Activated CD4-positive, alpha-beta T cell treated with anti-CD3 and anti-CD28 coated beads for 36 hours (primary cell): ENCODE measurements at regions of chr17 and their contacts with region 1.

Region 1: DNA sequence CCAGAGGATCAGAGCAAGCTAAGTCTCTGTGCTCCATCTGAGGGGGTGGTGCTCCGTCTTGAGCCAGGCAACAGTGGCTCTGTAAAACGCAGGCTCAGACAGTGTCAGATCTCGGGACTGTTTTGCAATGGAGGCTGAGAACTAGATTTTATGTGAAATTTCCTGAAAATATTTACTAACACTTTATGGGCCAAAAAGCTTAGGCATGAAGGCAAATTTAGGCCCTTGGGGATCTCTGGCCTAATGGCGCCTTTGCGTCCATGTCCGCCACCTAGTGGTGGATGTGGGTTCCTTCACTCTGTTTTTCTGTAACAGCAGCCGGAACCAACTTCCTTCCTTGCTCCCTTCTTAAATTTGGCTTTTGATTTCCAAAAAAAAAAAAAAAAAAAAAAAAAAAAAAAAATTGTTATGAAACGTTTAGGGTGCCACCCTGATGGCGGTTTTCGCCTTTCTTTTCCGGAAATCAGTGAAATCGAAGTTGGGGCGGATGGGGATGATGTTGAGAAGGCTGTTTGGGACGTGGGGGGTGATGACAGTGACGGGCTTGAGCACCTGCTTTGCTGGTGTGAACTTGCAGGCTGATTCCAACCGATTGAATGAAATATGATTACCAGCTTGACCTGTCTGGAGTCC is 14.0 kb upstream of the ELAC2 start:
- DNase-seq: peak; percentile 66
- ATAC-seq: peak; percentile 80
- H3K4me3 Mint-ChIP-seq: no peak overlapping the region
- H3K27ac Mint-ChIP-seq: no peak overlapping the region
- H3K4me1 Mint-ChIP-seq: peaks cover 7% of the 10 kb centered on the region
- H3K27me3 Mint-ChIP-seq: peaks cover 5% of the 10 kb centered on the region

Region 2: DNA sequence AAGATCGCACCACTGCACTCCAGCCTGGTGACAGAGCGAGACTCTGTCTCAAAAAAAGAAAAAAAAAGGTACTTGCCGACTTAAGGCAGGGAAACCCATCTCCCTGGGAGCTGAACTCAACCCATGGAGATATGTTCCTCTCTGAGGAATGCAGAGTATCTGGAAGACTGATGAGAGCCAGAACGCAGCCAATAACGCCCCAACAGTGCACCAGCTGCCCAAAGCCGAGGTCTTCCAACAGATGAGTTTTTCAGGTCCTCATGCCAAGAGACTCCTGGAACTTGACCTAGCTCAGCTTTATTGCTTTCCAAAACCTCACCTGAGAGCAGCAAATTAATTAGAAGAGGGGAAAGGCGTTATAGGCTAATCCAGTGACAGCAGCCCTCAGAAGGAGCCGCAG is 23.4 kb before region 1 on chr17:
- CTCF ChIA-PET with region 1: interaction called, 20 read pairs
- POLR2A ChIA-PET with region 1: no interaction called
- intact Hi-C with region 1: no loop called
- DNase-seq: no peak
- ATAC-seq: no peak
- H3K4me3 Mint-ChIP-seq: no peak overlapping the region
- H3K27ac Mint-ChIP-seq: no peak overlapping the region
- H3K4me1 Mint-ChIP-seq: peaks cover 3% of the 10 kb centered on the region
- H3K27me3 Mint-ChIP-seq: no peaks in the 10 kb centered on the region

Region 3: DNA sequence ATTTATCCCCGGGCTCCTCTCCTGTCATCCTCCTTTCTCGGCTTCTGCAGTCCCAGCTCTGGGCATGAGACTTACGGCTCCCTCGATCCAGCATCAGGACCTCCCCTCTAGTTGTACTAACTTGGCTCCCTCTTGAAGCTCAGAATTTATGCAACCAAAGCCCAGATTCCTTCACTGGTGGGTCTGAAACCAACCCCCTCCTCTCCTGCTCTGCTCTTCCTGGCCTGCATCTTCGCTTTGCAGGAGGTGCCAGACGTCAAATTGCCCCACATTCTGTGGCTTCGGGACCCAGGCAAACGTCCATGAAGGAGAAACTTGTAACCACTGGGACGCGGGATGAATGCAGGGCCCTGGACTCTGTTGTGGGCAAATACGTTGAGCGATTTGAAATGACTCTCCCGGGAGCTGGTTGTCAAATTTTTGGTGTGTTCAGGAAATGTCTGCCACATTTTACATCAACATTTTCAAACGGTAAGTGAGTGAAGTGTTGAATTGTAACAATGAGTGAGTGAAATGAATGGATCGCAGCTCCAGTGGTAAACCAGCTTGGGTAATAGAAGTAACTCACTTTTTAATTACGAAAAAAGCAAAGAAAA is 15.3 kb after region 1 on chr17:
- CTCF ChIA-PET with region 1: interaction called, 29 read pairs
- POLR2A ChIA-PET with region 1: no interaction called
- intact Hi-C with region 1: no loop called
- DNase-seq: no peak
- ATAC-seq: no peak
- H3K4me3 Mint-ChIP-seq: no peak overlapping the region
- H3K27ac Mint-ChIP-seq: no peak overlapping the region
- H3K4me1 Mint-ChIP-seq: no peaks in the 10 kb centered on the region
- H3K27me3 Mint-ChIP-seq: peaks cover 11% of the 10 kb centered on the region